ENCODE measurements at regions of chr1 and their contacts with region 1.

Region 1: GRCh38 chr1:208238710-208239472 is 5.3 kb downstream of the PLXNA2 start:
- DNase-seq: no peak
- H3K4me3 ChIP-seq: peak overlapping the region; percentile 5
- CTCF ChIP-seq: peak; percentile 89

Region 2: DNA sequence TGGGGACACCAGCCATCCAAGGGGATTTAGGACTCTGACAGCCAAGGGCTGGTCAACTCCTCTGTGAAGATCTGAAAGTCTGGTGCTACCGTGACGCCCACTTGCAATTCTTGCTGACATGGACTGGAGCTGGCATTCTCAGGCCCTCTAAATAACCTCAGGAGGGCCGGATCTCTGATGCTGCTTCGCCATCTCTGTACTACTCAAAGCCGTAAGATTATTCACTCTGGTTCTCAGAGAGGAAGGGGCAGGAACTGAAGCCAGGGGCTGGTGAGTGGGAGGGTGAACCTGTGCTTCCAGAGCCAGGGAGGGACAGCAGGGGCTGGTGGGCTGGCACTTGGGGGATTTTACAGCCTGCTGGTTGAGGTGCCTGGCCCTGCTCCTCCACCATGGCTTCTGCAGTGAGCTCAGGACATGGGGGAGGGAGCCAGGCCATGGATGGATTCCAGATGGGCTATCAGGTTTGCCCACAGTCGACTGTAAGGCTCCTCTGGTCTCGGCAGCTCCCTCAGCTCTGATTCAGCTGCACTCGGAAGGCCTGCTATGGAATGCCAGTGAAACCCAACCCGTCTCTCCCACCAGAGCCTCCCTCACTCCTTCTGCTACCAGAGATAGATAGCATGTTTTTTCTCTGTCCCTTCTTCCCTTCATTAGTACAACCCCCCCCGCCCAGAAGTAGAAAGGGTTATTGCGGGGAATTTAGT is 79.2 kb before region 1 on chr1:
- in situ Hi-C with region 1: loop called (anchors 5 kb)
- DNase-seq: peak; percentile 65
- H3K4me3 ChIP-seq: no peak overlapping the region
- CTCF ChIP-seq: no peak

Region 3: DNA sequence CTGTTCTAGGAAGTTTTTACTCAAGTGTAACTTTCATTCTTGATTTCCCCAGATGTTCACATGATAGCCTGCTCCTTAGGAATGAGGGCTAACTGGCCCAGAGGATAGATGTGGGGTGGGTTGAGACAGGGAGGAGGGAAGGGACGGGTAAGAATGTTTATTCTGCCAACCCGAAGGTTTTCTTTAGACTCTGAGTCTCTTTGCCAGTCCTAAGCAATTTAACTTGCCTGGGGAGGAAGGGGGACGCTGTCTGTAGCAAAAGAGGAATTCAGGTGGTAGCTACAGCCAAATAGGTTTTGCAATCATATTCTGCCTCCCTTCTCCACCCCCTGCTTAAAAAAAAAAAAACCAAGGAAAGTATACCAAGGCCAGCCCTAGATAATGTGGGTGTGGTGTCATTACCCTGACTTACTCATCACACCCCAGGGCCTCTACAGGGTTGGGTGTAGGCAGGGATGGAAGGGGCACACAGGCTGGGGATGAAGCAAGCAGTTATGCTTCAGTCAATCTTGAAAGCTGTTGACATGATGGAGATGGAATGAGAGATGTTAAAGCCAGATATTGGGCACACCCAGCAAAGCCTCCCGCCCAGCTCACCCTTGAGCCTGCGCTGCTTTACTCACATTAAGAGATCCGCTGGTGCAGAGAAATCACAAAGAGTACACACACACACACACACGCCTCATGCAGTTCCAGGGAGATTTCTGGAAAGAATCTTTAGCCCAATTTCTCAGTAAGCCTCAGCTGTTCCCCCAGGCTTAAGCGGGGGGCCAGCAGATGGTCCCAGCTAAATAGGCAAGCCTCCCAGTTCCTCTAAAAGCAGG is 54.6 kb before region 1 on chr1:
- in situ Hi-C with region 1: no loop called
- DNase-seq: no peak
- H3K4me3 ChIP-seq: no peak overlapping the region
- CTCF ChIP-seq: no peak

Measured in astrocyte of the cerebellum (primary cell).